Naive thymus-derived CD4-positive, alpha-beta T cell (primary cell): ENCODE measurements at regions of chr17 and their contacts with region 1.

Region 1: GRCh38 chr17:66200685-66201092 is 8.8 kb upstream of the CEP112 start:
- DNase-seq: peak in 7 of 9 donors; percentile 20 to 57 (median 55)
- ATAC-seq: peak; percentile 66
- H3K4me3 ChIP-seq: no peak overlapping the region
- H3K4me3 Mint-ChIP-seq: peak overlapping the region in 6 of 10 donors; percentile 21 to 66 (median 44)
- H3K27ac ChIP-seq: no peak overlapping the region
- H3K27ac Mint-ChIP-seq: peak overlapping the region in 8 of 9 donors; percentile 25 to 89 (median 69)
- H3K4me1 ChIP-seq: peaks cover 0 to 17% of the 10 kb centered on the region in 2 donors
- H3K4me1 Mint-ChIP-seq: peaks cover 12 to 26% (median 21%) of the 10 kb centered on the region in 7 donors
- H3K27me3 ChIP-seq: no peaks in the 10 kb centered on the region
- H3K27me3 Mint-ChIP-seq: peaks cover 0 to 4% (median 0%) of the 10 kb centered on the region in 5 donors

Region 2: DNA sequence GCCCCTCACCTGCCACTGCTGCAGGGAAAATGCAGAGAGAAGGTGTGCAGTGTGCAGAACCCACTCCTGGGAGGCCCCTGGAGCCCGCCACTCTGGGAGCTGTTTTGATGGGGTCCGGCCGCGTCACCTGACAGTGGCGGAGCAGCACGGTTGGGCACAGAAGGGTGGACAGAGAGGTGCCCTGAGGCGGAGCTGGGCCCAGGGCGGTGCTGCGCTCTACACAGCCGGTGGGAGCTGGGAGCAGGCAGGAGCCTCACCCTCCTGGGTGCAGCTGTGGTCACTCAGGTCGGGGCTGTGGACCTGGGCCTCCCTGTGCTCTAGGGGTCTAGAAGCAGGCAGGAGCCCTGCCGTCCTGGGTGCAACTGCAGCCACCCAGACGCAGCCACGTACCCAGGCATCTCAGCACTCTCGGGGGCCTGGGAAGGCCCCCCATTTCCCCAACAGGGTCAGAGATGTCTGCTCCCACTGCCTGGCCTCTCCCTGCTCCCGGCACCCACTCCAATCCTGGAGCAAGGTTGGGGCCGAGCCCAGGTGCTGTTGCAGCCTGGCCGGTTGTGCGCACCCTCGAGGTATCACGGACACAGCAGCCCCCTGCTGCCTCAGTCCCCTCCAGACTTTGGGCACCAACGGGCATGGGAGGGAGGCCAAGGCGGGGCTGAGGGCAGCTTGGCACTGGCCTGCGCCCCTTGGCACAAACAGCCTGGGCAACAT is 334.8 kb before region 1 on chr17:
- CTCF ChIA-PET with region 1: no interaction called
- POLR2A ChIA-PET with region 1: no interaction called
- intact Hi-C with region 1: no loop called
- DNase-seq: no peak
- ATAC-seq: no peak
- H3K4me3 ChIP-seq: no peak overlapping the region
- H3K4me3 Mint-ChIP-seq: no peak overlapping the region
- H3K27ac ChIP-seq: no peak overlapping the region
- H3K27ac Mint-ChIP-seq: no peak overlapping the region
- H3K4me1 ChIP-seq: no peaks in the 10 kb centered on the region
- H3K4me1 Mint-ChIP-seq: no peaks in the 10 kb centered on the region
- H3K27me3 ChIP-seq: no peaks in the 10 kb centered on the region
- H3K27me3 Mint-ChIP-seq: peaks cover 0 to 7% (median 2%) of the 10 kb centered on the region in 5 donors

Region 3: DNA sequence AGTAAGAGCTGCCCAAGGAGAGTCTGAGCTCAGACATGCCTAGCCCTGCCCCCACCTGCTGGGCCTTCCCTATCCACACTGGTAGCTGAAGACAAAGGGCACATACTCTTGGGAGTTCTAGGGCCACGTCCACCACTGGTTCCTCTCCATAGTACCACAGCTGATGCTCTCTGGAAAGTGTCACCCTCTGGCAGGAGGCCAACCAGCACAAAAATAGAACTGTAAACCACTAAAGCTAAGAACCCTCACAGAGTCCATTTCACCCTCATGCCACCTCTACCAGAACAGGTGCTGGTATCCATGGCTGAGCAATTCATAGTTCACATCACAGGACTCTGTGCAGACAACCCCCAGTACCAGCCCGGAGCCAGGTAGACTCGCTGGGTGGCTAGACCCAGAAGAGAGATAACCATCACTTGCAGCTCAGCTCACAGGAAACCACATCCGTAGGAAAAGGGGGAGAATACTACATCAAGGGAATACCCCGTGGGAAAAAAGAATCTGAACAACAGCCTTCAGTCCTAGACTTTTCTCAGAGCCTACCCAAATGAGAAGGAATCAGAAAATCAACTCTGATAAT is 124.1 kb before region 1 on chr17:
- CTCF ChIA-PET with region 1: no interaction called
- POLR2A ChIA-PET with region 1: no interaction called
- intact Hi-C with region 1: no loop called
- DNase-seq: peak in 2 of 9 donors; percentile 4 to 6
- ATAC-seq: no peak
- H3K4me3 ChIP-seq: no peak overlapping the region
- H3K4me3 Mint-ChIP-seq: peak overlapping the region in 9 of 10 donors; percentile 4 to 71 (median 44)
- H3K27ac ChIP-seq: no peak overlapping the region
- H3K27ac Mint-ChIP-seq: peak overlapping the region in 2 of 9 donors; percentile 2 to 28
- H3K4me1 ChIP-seq: no peaks in the 10 kb centered on the region
- H3K4me1 Mint-ChIP-seq: peaks cover 7 to 31% (median 28%) of the 10 kb centered on the region in 7 donors
- H3K27me3 ChIP-seq: no peaks in the 10 kb centered on the region
- H3K27me3 Mint-ChIP-seq: peaks cover 0 to 5% (median 0%) of the 10 kb centered on the region in 5 donors

Region 4: DNA sequence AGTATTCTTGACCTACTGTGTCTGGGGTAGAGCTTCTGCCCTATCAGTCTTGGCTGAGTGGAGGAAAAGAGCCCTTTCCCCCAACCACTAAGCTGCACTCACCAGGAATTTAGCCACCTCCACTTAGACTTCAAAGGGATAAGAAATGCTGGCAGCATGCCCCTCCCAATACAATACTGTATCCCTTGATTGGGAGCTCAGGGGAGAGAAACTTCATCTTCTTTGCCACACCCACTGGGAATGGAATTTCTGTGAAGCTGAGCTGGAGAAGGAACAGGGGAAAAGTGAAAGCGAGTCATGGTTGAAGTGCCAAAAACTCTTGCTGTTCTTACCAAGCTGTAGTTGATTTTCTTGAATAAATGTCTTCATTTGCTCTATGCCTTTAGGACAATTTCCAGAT is 77.5 kb before region 1 on chr17:
- CTCF ChIA-PET with region 1: no interaction called
- POLR2A ChIA-PET with region 1: no interaction called
- intact Hi-C with region 1: no loop called
- DNase-seq: no peak
- ATAC-seq: no peak
- H3K4me3 ChIP-seq: no peak overlapping the region
- H3K4me3 Mint-ChIP-seq: no peak overlapping the region
- H3K27ac ChIP-seq: no peak overlapping the region
- H3K27ac Mint-ChIP-seq: no peak overlapping the region
- H3K4me1 ChIP-seq: no peaks in the 10 kb centered on the region
- H3K4me1 Mint-ChIP-seq: no peaks in the 10 kb centered on the region
- H3K27me3 ChIP-seq: no peaks in the 10 kb centered on the region
- H3K27me3 Mint-ChIP-seq: peaks cover 0 to 12% (median 5%) of the 10 kb centered on the region in 5 donors

Region 5: GRCh38 chr17:66310528-66311148 is 109.9 kb after region 1 on chr17:
- CTCF ChIA-PET with region 1: no interaction called
- POLR2A ChIA-PET with region 1: no interaction called
- intact Hi-C with region 1: no loop called
- DNase-seq: peak in 1 of 9 donors; percentile 37
- ATAC-seq: no peak
- H3K4me3 ChIP-seq: no peak overlapping the region
- H3K4me3 Mint-ChIP-seq: peak overlapping the region in 9 of 10 donors; percentile 2 to 99 (median 51)
- H3K27ac ChIP-seq: peak overlapping the region; percentile 31
- H3K27ac Mint-ChIP-seq: peak overlapping the region; percentile 21 to 98 (median 88)
- H3K4me1 ChIP-seq: peaks cover 11 to 68% of the 10 kb centered on the region in 2 donors
- H3K4me1 Mint-ChIP-seq: peaks cover 56 to 100% (median 94%) of the 10 kb centered on the region in 7 donors
- H3K27me3 ChIP-seq: no peaks in the 10 kb centered on the region
- H3K27me3 Mint-ChIP-seq: no peaks in the 10 kb centered on the region

Region 6: DNA sequence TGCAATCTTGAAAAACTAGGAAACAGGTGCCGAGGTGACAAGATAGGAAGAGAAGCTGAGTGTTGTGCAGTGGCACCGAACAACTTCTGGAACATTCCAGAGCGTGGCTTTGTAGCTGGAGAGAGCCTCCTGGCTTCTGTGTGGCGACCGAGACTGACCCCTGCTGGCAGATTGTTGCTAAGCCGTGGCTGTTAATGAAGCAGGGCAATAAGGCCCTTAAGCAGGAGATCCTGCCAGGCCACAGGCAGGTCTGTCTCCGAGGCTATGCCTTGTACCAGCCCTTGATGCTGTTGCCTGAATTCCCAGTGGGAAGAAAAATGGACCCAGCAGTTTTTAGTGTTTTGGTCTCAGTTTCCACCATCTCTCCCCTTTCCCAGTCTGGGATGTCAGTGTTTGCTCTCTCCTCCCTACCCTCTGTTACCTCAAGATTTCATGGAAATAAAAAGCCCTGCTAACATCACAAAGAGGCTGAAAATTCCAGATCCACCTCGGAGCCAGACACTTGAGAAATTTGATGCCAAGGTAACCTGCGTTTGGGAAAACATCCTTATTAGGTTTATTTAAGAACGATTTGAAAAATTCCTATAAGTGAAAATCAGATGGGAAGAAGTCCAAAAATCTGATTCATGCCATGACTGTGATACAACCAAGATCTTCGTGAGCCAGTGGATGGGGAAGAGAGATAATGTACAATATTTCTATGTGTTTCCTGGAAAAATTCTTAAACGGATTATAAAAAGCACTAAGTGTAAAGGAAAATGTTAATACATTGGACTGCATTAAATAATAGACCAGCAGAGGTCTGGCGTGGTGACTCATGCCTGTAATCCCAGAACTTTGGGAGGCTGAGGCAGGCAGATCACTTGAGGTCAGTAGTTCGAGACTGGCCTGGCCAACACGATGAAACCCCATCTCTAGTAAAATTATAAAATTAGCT is 366.8 kb after region 1 on chr17:
- CTCF ChIA-PET with region 1: interaction called, 12 read pairs
- POLR2A ChIA-PET with region 1: interaction called, 3 read pairs
- intact Hi-C with region 1: loop called (anchors 1 to 2 kb)
- DNase-seq: peak; percentile 30 to 76 (median 65)
- ATAC-seq: peak; percentile 87
- H3K4me3 ChIP-seq: no peak overlapping the region
- H3K4me3 Mint-ChIP-seq: no peak overlapping the region
- H3K27ac ChIP-seq: no peak overlapping the region
- H3K27ac Mint-ChIP-seq: peak overlapping the region in 7 of 9 donors; percentile 3 to 87 (median 23)
- H3K4me1 ChIP-seq: peaks cover 0 to 14% of the 10 kb centered on the region in 2 donors
- H3K4me1 Mint-ChIP-seq: peaks cover 17 to 56% (median 51%) of the 10 kb centered on the region in 7 donors
- H3K27me3 ChIP-seq: no peaks in the 10 kb centered on the region
- H3K27me3 Mint-ChIP-seq: no peaks in the 10 kb centered on the region

Region 7: GRCh38 chr17:66673668-66674315 is 473.1 kb after region 1 on chr17:
- CTCF ChIA-PET with region 1: interaction called, 4 read pairs
- POLR2A ChIA-PET with region 1: no interaction called
- intact Hi-C with region 1: loop called (anchors 1 to 5 kb)
- DNase-seq: peak in 8 of 9 donors; percentile 32 to 87 (median 78)
- ATAC-seq: peak; percentile 92
- H3K4me3 ChIP-seq: no peak overlapping the region
- H3K4me3 Mint-ChIP-seq: peak overlapping the region; percentile 39 to 84 (median 74)
- H3K27ac ChIP-seq: peak overlapping the region; percentile 59
- H3K27ac Mint-ChIP-seq: peak overlapping the region; percentile 88 to 98 (median 92)
- H3K4me1 ChIP-seq: peaks cover 18 to 45% of the 10 kb centered on the region in 2 donors
- H3K4me1 Mint-ChIP-seq: peaks cover 38 to 79% (median 64%) of the 10 kb centered on the region in 7 donors
- H3K27me3 ChIP-seq: no peaks in the 10 kb centered on the region
- H3K27me3 Mint-ChIP-seq: no peaks in the 10 kb centered on the region

Region 8: GRCh38 chr17:66906321-66907278 is 705.9 kb after region 1 on chr17:
- CTCF ChIA-PET with region 1: interaction called, 11 read pairs
- POLR2A ChIA-PET with region 1: no interaction called
- intact Hi-C with region 1: loop called (anchors 1 kb)
- DNase-seq: peak; percentile 15 to 64 (median 51)
- ATAC-seq: peak; percentile 76
- H3K4me3 ChIP-seq: no peak overlapping the region
- H3K4me3 Mint-ChIP-seq: peak overlapping the region in 1 of 10 donors; percentile 4
- H3K27ac ChIP-seq: no peak overlapping the region
- H3K27ac Mint-ChIP-seq: peak overlapping the region in 2 of 9 donors; percentile 25 to 27
- H3K4me1 ChIP-seq: no peaks in the 10 kb centered on the region
- H3K4me1 Mint-ChIP-seq: peaks cover 0 to 9% (median 6%) of the 10 kb centered on the region in 7 donors
- H3K27me3 ChIP-seq: peaks cover 0 to 4% of the 10 kb centered on the region in 2 donors
- H3K27me3 Mint-ChIP-seq: peaks cover 0 to 12% (median 6%) of the 10 kb centered on the region in 5 donors